ENCODE measurements at regions of chr4 and their contacts with region 1.

Region 1: GRCh38 chr4:7802093-7802726 is 137.5 kb downstream of the AFAP1 start:
- DNase-seq: peak; percentile 85
- CTCF ChIP-seq: peak; percentile 93

Region 2: GRCh38 chr4:7254736-7255487 is 547.3 kb before region 1 on chr4:
- CTCF ChIA-PET with region 1: no interaction called
- POLR2A ChIA-PET with region 1: no interaction called
- DNase-seq: peak; percentile 60
- CTCF ChIP-seq: no peak

Region 3: GRCh38 chr4:7673121-7673520 is 129.1 kb before region 1 on chr4:
- CTCF ChIA-PET with region 1: no interaction called
- POLR2A ChIA-PET with region 1: no interaction called
- DNase-seq: no peak
- CTCF ChIP-seq: no peak

Region 4: GRCh38 chr4:7761720-7762119 is 40.5 kb before region 1 on chr4:
- CTCF ChIA-PET with region 1: interaction called, 547 read pairs
- POLR2A ChIA-PET with region 1: no interaction called
- DNase-seq: peak; percentile 87
- CTCF ChIP-seq: peak; percentile 88

Region 5: GRCh38 chr4:7827991-7828720 is 25.9 kb after region 1 on chr4:
- CTCF ChIA-PET with region 1: interaction called, 239 read pairs
- POLR2A ChIA-PET with region 1: no interaction called
- DNase-seq: peak; percentile 49
- CTCF ChIP-seq: no peak

Region 6: DNA sequence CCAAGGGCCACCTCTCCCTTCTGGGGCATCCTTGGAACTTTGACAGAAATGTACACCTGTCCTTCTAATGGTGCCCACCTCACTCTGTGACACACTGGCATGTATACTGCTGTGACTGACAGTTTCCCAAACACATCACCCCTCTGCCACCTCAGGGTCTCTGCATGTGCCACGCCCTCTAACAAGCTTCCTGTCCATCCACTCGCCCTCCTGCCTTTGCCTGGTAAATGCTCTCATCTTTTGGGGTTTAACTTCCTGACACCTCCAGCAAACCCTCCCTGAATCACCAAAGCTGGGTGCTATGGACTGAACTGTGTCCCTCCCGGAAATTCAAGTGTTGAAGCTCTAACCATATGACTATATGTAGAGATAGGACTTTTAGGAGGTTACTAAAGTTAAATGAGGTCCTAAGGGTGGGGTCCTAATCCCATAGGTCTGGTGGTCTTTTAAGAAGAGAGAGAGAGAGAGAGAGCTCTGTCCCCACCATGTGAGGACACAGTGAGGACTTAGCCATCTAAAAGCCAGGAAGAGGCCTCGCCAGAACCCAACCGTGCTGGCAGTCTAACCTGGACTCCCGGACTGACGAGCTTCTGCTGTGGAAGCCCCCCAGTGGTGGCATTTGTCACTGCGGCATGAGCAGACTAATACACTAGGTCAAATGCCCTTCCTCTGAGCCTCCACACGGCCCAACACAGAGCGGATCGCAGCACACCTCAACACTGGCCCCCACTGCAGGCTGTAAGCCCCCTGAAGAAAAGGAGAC is 41.8 kb after region 1 on chr4:
- CTCF ChIA-PET with region 1: interaction called, 59 read pairs
- POLR2A ChIA-PET with region 1: interaction called, 3 read pairs
- DNase-seq: peak; percentile 65
- CTCF ChIP-seq: peak; percentile 56

Region 7: DNA sequence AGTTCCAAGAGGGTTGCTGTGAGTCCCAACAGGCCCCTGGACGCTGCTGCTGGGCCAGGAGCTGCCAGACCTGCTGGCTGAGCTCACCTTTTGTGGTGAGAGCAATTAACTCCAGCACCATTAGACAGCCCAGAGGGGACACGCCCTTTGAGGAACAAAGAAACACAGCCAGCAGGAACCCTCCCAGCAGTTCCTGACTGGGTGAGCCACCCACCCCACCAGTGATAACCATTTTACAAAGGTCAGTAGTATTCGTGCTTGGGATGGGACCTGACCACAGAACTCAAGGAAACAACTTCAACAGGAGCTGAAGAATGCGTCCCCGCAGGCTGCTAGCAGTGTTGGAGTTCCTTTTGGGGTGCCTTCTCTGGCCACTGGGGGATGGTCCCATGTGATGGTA is 176.3 kb after region 1 on chr4:
- CTCF ChIA-PET with region 1: interaction called, 10 read pairs
- POLR2A ChIA-PET with region 1: no interaction called
- DNase-seq: no peak
- CTCF ChIP-seq: no peak

Region 8: GRCh38 chr4:7987148-7987989 is 185.2 kb after region 1 on chr4:
- CTCF ChIA-PET with region 1: interaction called, 146 read pairs
- POLR2A ChIA-PET with region 1: no interaction called
- DNase-seq: peak; percentile 77
- CTCF ChIP-seq: peak; percentile 82

Region 9: DNA sequence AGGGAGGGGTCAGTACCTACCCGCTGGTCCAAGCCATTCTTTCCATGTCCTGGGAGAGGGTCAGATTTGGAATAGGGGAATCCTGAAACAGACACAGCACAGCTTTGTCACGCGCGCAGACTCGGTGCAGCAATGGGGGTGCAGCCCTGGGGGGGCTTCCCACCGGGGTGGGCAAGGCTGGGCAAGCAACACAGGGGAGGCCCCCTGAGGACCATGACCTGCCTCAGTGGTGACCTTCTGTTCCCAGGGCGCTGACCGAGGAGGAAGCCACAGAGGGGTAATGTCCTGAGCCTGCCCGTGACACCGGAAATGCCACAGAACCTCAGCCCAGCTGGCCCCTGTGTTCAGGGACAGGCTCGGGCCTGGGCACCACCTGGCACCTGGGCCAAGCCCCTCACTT is 190.6 kb after region 1 on chr4:
- CTCF ChIA-PET with region 1: interaction called, 146 read pairs
- POLR2A ChIA-PET with region 1: no interaction called
- DNase-seq: no peak
- CTCF ChIP-seq: no peak

Region 10: GRCh38 chr4:8035371-8035780 is 233.2 kb after region 1 on chr4:
- CTCF ChIA-PET with region 1: no interaction called
- POLR2A ChIA-PET with region 1: no interaction called
- DNase-seq: no peak
- CTCF ChIP-seq: no peak

Region 11: DNA sequence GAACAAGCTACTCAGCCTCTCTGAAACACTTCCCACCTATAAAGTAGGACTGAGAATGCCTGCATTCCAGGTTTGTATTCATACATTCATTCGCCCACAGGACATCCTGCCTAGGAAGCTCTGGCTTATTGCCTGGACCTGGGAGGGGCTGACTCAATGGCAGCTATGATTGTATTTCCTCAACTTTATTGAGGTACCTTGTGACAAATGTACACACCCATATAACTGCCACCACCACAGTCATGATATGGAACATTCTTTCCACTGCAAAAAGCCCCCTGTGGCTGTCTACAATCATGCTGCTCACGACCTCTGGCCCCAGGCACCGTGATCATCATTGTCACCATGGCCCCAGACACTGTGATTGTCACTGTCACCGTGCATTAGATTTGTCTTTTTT is 288.1 kb after region 1 on chr4:
- CTCF ChIA-PET with region 1: no interaction called
- POLR2A ChIA-PET with region 1: no interaction called
- DNase-seq: no peak
- CTCF ChIP-seq: no peak

Measured in GM10248 (cell line).